Activated naive CD4-positive, alpha-beta T cell treated with anti-CD3 and anti-CD28 coated beads for 36 hours (primary cell): ENCODE measurements at regions of chr1 and their contacts with region 1.

Region 1: GRCh38 chr1:159077120-159077961 is 775 bp upstream of the AIM2 start:
- DNase-seq: peak; percentile 98
- H3K4me3 Mint-ChIP-seq: peak overlapping the region; percentile 76
- H3K27ac Mint-ChIP-seq: peak overlapping the region; percentile 98
- H3K4me1 Mint-ChIP-seq: peaks cover 32% of the 10 kb centered on the region
- H3K27me3 Mint-ChIP-seq: no peaks in the 10 kb centered on the region

Region 2: GRCh38 chr1:158716335-158716734 is 361.0 kb before region 1 on chr1:
- CTCF ChIA-PET with region 1: no interaction called
- intact Hi-C with region 1: loop called (anchors 2 kb)
- DNase-seq: no peak
- H3K4me3 Mint-ChIP-seq: no peak overlapping the region
- H3K27ac Mint-ChIP-seq: no peak overlapping the region
- H3K4me1 Mint-ChIP-seq: peaks cover 4% of the 10 kb centered on the region
- H3K27me3 Mint-ChIP-seq: peaks cover 19% of the 10 kb centered on the region

Region 3: GRCh38 chr1:158969855-158970254 is 107.5 kb before region 1 on chr1:
- CTCF ChIA-PET with region 1: interaction called, 3 read pairs
- intact Hi-C with region 1: loop called (anchors 1 kb)
- DNase-seq: peak; percentile 30
- H3K4me3 Mint-ChIP-seq: no peak overlapping the region
- H3K27ac Mint-ChIP-seq: peak overlapping the region; percentile 89
- H3K4me1 Mint-ChIP-seq: peaks cover 35% of the 10 kb centered on the region
- H3K27me3 Mint-ChIP-seq: peaks cover 5% of the 10 kb centered on the region

Region 4: DNA sequence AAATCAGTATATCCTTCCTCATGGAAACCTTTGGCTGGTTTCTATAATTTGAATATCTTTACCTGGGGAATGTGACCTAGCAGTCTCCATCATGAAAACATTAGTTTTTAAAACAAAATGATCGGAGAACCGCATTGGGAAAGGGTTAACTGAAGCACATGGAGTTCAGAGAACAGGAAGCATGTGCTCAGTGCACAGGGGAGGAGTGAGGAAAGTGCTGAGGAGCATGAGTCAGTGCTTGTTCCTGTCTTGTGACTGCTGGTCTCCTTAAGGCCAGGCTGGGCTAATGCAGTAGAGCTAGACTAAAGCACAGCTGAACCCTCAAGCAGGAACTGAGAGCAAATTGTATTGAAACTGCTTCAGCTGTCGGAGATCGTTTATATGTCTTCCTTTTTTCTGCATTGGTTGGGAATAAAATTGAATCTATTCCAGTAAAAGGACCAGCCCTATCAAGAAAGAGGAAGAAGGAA is 61.9 kb before region 1 on chr1:
- CTCF ChIA-PET with region 1: interaction called, 5 read pairs
- intact Hi-C with region 1: loop called (anchors 1 kb)
- DNase-seq: peak; percentile 84
- H3K4me3 Mint-ChIP-seq: peak overlapping the region; percentile 91
- H3K27ac Mint-ChIP-seq: peak overlapping the region; percentile 99
- H3K4me1 Mint-ChIP-seq: peaks cover 42% of the 10 kb centered on the region
- H3K27me3 Mint-ChIP-seq: no peaks in the 10 kb centered on the region

Region 5: DNA sequence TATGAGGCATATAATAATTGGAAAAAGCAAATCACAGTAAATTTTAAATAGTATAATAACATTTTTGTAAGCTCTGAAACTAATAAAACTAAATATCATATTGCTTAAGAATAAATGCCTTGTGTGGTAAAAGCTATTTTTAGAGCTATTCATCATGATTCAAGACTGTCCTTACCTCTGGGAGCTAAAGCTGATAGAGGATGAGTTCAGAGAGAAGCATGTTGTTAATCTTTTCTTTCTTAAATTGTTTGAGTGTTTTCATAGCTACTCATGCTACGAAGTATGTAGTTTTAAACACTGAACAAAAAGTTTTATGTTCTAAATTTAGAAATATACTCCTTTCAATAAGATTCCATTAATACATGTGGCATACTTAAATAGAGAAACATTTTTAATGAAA is 37.1 kb before region 1 on chr1:
- CTCF ChIA-PET with region 1: no interaction called
- intact Hi-C with region 1: no loop called
- DNase-seq: no peak
- H3K4me3 Mint-ChIP-seq: no peak overlapping the region
- H3K27ac Mint-ChIP-seq: no peak overlapping the region
- H3K4me1 Mint-ChIP-seq: peaks cover 53% of the 10 kb centered on the region
- H3K27me3 Mint-ChIP-seq: no peaks in the 10 kb centered on the region

Region 6: DNA sequence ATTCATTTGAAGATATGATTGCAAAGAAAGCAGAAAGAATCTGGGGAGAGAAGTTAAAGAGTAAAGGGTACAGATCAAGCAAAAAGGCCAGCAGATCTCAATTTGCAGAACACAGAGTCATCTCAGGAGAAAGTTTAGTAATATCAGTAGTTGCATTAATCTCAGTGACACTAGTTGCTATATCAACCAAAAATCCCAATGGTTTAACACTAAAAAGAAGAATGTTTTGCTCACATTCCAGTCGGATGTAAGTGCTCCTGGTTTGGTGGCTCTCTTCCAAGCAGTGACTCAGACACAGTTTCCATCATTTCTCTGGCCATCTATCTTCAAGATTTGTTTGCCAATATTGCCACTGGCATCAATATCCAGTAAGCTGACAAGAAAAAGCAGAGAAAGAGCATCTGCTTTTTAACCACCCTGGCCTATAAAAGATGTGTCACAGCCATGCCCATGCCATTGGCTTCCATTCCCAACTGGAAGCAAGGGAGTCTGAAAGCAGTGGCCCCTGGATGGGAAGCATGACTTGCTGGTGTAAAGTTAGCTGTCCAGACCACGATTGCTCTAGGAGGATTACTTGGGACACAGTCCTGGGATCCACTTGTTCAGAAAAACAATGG is 44.8 kb after region 1 on chr1:
- CTCF ChIA-PET with region 1: no interaction called
- intact Hi-C with region 1: loop called (anchors 1 kb)
- DNase-seq: no peak
- H3K4me3 Mint-ChIP-seq: no peak overlapping the region
- H3K27ac Mint-ChIP-seq: no peak overlapping the region
- H3K4me1 Mint-ChIP-seq: peaks cover 13% of the 10 kb centered on the region
- H3K27me3 Mint-ChIP-seq: peaks cover 16% of the 10 kb centered on the region